Naive thymus-derived CD4-positive, alpha-beta T cell (primary cell): ENCODE measurements at regions of chr13 and their contacts with region 1.

Region 1: GRCh38 chr13:113208424-113209335 is at the start of gene PCID2:
- DNase-seq: peak; percentile 87 to 99 (median 93)
- ATAC-seq: peak; percentile 81
- H3K4me3 ChIP-seq: peak within 1 kb of the TSS; percentile 79
- H3K4me3 Mint-ChIP-seq: peak within 1 kb of the TSS; percentile 87 to 94 (median 90)
- H3K27ac ChIP-seq: peak within 1 kb of the TSS; percentile 88
- H3K27ac Mint-ChIP-seq: peak within 1 kb of the TSS; percentile 83 to 95 (median 92)
- H3K4me1 ChIP-seq: peaks cover 25 to 46% of the 10 kb centered on the region in 2 donors
- H3K4me1 Mint-ChIP-seq: peaks cover 46 to 68% (median 57%) of the 10 kb centered on the region in 7 donors
- H3K27me3 ChIP-seq: no peaks in the 10 kb centered on the region
- H3K27me3 Mint-ChIP-seq: no peaks in the 10 kb centered on the region
- total RNA-seq, gene PCID2: 44.2 to 83.7 (median 77.1) TPM

Region 2: DNA sequence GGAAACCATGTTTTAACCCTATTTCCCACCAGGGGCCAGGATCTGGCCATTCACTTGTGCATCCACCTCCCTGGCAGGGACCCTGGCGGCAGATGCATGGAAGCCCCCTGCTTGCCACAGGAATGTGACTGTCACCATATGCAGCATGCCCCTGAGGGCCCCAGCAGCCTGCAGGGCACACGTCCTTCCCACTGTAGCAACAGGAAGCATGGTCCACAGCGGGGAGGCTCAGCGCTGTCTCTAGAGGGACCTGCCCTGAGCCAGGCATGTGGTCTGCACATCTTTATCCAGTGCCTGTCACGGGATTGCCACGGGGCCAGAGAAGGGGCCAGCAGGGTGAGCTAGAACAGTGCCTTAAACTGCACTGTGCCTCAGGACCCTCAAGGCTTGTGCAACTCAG is 274.6 kb before region 1 on chr13:
- CTCF ChIA-PET with region 1: no interaction called
- POLR2A ChIA-PET with region 1: no interaction called
- intact Hi-C with region 1: no loop called
- DNase-seq: no peak
- ATAC-seq: no peak
- H3K4me3 ChIP-seq: no peak overlapping the region
- H3K4me3 Mint-ChIP-seq: no peak overlapping the region
- H3K27ac ChIP-seq: no peak overlapping the region
- H3K27ac Mint-ChIP-seq: no peak overlapping the region
- H3K4me1 ChIP-seq: no peaks in the 10 kb centered on the region
- H3K4me1 Mint-ChIP-seq: peaks cover 4 to 19% (median 9%) of the 10 kb centered on the region in 7 donors
- H3K27me3 ChIP-seq: peaks cover 5 to 8% of the 10 kb centered on the region in 2 donors
- H3K27me3 Mint-ChIP-seq: peaks cover 6 to 45% (median 26%) of the 10 kb centered on the region in 5 donors

Region 3: DNA sequence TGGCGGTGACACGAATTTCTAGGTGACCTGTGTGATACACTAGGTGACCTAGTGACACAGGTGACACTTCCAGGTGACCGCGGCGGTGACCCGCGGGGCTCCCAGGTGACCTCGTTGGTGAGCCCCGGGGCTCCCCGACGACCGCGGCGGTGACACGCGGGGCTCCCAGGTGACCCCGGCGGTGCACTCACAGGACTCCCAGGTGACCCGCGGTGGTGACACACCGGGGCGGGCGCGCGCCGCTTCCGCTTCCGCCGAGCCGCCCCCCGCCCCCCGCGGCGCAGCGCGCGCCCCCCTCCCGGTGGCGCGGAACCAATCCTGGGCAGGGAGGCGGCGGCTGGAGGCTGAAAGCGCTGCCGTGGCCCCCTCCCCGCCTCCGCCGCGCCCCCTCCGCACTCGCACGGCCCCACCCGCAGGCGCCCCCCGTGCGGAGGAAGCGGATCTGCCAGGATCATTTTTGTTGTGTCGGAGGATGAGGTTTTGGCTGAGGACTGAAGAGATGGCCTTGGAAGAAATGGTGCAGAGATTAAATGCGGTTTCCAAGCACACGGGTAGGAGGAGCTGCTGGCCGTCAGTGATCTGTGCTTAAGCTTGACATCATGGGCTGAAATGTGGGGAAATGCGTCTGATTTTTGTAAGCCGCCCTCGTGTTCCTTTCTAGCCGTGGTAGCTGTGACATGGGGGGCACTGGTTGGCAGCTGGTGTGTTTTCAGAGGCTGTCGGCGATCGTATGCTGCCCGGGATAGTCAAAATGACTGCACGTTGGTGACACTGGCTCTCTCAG is 239.6 kb before region 1 on chr13 and contains the start of gene MCF2L:
- CTCF ChIA-PET with region 1: no interaction called
- POLR2A ChIA-PET with region 1: interaction called, 8 read pairs
- intact Hi-C with region 1: loop called in 1 of 2 experiments (anchors 1 kb)
- DNase-seq: peak; percentile 33 to 80 (median 78)
- ATAC-seq: peak; percentile 83
- H3K4me3 ChIP-seq: peak within 1 kb of the TSS; percentile 73
- H3K4me3 Mint-ChIP-seq: peak within 1 kb of the TSS; percentile 89 to 100 (median 94)
- H3K27ac ChIP-seq: peak within 1 kb of the TSS; percentile 62
- H3K27ac Mint-ChIP-seq: peak within 1 kb of the TSS; percentile 67 to 97 (median 94)
- H3K4me1 ChIP-seq: peaks cover 10 to 14% of the 10 kb centered on the region in 2 donors
- H3K4me1 Mint-ChIP-seq: peaks cover 9 to 57% (median 42%) of the 10 kb centered on the region in 7 donors
- H3K27me3 ChIP-seq: no peaks in the 10 kb centered on the region
- H3K27me3 Mint-ChIP-seq: peaks cover 0 to 35% (median 0%) of the 10 kb centered on the region in 5 donors
- total RNA-seq, gene MCF2L: 0.51 to 32.6 (median 21.9) TPM

Region 4: GRCh38 chr13:113176280-113176679 is 32.4 kb before region 1 on chr13:
- CTCF ChIA-PET with region 1: no interaction called
- POLR2A ChIA-PET with region 1: interaction called, 8 read pairs
- intact Hi-C with region 1: loop called in 1 of 2 experiments (anchors 2 kb)
- DNase-seq: peak in 1 of 9 donors; percentile 36
- ATAC-seq: peak; percentile 91
- H3K4me3 ChIP-seq: no peak overlapping the region
- H3K4me3 Mint-ChIP-seq: peak overlapping the region in 9 of 10 donors; percentile 1 to 68 (median 43)
- H3K27ac ChIP-seq: peak overlapping the region; percentile 46
- H3K27ac Mint-ChIP-seq: peak overlapping the region; percentile 86 to 94 (median 92)
- H3K4me1 ChIP-seq: peaks cover 7 to 46% of the 10 kb centered on the region in 2 donors
- H3K4me1 Mint-ChIP-seq: peaks cover 5 to 53% (median 9%) of the 10 kb centered on the region in 7 donors
- H3K27me3 ChIP-seq: no peaks in the 10 kb centered on the region
- H3K27me3 Mint-ChIP-seq: no peaks in the 10 kb centered on the region

Region 5: DNA sequence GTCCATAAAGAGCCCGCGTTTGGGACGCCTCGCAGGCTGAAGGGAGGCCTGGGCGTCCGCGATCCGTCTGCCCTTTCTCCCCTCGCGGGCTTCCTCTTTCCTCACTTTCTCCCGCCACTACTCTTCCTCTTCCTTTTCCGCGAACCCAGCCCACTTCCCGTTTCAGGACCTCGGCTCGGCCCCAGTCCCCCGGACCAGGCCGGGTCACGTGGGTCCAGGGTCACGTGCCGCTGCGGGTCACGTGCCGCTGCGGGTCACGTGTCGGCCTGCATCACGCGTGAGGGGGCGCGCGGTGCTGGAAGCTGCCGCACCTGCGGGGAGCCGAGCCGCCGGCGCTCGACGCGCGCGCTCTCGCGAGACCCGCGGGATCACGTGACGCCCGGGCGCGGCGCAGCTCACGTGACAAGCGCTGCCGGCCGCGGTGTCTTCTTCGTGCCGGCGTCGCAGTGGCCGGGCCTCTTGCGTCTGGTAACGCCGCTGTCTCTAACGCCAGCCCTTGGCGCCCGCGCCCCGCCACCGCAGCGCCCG is 88.2 kb after region 1 on chr13 and contains the start of gene LAMP1:
- CTCF ChIA-PET with region 1: no interaction called
- POLR2A ChIA-PET with region 1: interaction called, 16 read pairs
- intact Hi-C with region 1: loop called (anchors 1 kb)
- DNase-seq: peak; percentile 97 to 100 (median 99)
- ATAC-seq: peak; percentile 92
- H3K4me3 ChIP-seq: peak within 1 kb of the TSS; percentile 96
- H3K4me3 Mint-ChIP-seq: peak within 1 kb of the TSS; percentile 88 to 99 (median 98)
- H3K27ac ChIP-seq: peak within 1 kb of the TSS; percentile 90
- H3K27ac Mint-ChIP-seq: peak within 1 kb of the TSS; percentile 98 to 100 (median 100)
- H3K4me1 ChIP-seq: peaks cover 14 to 19% of the 10 kb centered on the region in 2 donors
- H3K4me1 Mint-ChIP-seq: peaks cover 28 to 45% (median 39%) of the 10 kb centered on the region in 7 donors
- H3K27me3 ChIP-seq: no peaks in the 10 kb centered on the region
- H3K27me3 Mint-ChIP-seq: peaks cover 8 to 37% (median 13%) of the 10 kb centered on the region in 5 donors
- total RNA-seq, gene LAMP1: 77.3 to 113 (median 98.8) TPM

Region 6: GRCh38 chr13:113490496-113491417 is 282.1 kb after region 1 on chr13 and contains the start of gene DCUN1D2:
- CTCF ChIA-PET with region 1: no interaction called
- POLR2A ChIA-PET with region 1: no interaction called
- intact Hi-C with region 1: loop called (anchors 1 kb)
- DNase-seq: peak; percentile 43 to 90 (median 59)
- ATAC-seq: peak; percentile 91
- H3K4me3 ChIP-seq: peak within 1 kb of the TSS; percentile 53
- H3K4me3 Mint-ChIP-seq: peak within 1 kb of the TSS; percentile 84 to 97 (median 92)
- H3K27ac ChIP-seq: peak within 1 kb of the TSS; percentile 74
- H3K27ac Mint-ChIP-seq: peak within 1 kb of the TSS; percentile 29 to 92 (median 85)
- H3K4me1 ChIP-seq: peaks cover 9 to 24% of the 10 kb centered on the region in 2 donors
- H3K4me1 Mint-ChIP-seq: peaks cover 43 to 78% (median 72%) of the 10 kb centered on the region in 7 donors
- H3K27me3 ChIP-seq: no peaks in the 10 kb centered on the region
- H3K27me3 Mint-ChIP-seq: no peaks in the 10 kb centered on the region
- total RNA-seq, gene DCUN1D2: 21.4 to 31.9 (median 23.4) TPM